ENCODE measurements at regions of chr12 and their contacts with region 1.

Region 1: DNA sequence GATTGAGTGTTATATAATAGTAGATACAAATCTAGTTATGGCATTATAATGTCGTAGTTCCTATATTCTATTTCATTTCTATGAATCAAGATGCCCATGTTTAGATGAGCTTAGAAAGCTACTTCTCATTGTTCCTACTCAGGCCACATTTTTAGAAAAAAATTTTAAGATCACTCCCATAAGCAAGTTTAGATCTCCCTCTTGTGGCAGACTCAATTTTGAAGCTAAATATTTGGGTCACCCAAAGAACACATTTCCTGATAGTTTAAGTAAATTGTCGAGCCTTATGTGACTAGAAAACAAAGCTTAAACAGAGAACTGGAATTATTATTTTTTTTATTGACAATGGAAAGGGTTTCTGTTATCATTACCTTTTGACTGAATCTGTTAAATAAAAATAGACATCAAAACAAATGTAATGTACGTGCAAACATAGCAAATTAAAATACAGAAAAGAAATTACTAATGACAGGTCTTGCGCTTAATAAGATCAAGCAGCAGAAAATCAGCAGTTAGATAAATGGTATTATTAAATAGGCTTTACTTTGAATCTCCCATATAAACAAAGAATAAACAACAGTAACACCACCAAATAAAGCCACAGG is 180.2 kb downstream of the ACSS3 start:
- DNase-seq: peak; percentile 30
- H3K4me3 Mint-ChIP-seq: no peak overlapping the region
- H3K27ac Mint-ChIP-seq: no peak overlapping the region
- H3K4me1 Mint-ChIP-seq: no peaks in the 10 kb centered on the region
- H3K27me3 Mint-ChIP-seq: no peaks in the 10 kb centered on the region
- CTCF ChIP-seq: peak; percentile 19

Region 2: DNA sequence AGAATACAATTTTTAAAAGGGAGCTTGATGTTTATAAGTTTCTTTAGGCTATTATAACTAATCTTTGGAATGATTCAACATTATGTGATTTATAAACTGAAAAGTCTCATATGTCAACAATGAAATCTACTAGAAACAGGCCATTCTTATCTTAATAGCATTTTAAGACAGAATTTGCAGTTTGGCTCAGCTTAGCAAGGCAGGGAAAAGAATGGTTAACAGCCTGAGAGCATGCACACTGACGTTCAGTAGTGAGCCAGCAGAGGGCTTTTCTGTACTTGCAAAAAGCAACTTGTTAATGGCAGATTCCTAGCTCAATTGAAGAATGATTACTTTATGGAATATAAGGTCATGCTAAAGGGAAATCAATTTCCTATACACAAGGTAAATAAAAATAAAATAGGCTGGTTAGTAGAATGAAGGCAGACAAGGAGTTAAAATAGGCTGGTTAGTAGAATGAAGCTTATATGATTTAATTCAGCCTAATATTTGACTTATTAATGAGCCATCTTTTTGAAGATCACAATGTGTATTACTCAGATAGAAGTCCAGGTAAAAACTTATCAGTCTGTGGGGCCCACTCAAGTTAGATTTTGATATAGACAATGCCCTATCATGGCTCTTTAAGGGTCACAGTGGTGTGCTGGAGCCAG is 1062.8 kb before region 1 on chr12:
- CTCF ChIA-PET with region 1: interaction called, 3 read pairs
- intact Hi-C with region 1: loop called (anchors 5 kb)
- DNase-seq: peak; percentile 48
- H3K4me3 Mint-ChIP-seq: no peak overlapping the region
- H3K27ac Mint-ChIP-seq: no peak overlapping the region
- H3K4me1 Mint-ChIP-seq: no peaks in the 10 kb centered on the region
- H3K27me3 Mint-ChIP-seq: no peaks in the 10 kb centered on the region
- CTCF ChIP-seq: peak; percentile 51

Region 3: DNA sequence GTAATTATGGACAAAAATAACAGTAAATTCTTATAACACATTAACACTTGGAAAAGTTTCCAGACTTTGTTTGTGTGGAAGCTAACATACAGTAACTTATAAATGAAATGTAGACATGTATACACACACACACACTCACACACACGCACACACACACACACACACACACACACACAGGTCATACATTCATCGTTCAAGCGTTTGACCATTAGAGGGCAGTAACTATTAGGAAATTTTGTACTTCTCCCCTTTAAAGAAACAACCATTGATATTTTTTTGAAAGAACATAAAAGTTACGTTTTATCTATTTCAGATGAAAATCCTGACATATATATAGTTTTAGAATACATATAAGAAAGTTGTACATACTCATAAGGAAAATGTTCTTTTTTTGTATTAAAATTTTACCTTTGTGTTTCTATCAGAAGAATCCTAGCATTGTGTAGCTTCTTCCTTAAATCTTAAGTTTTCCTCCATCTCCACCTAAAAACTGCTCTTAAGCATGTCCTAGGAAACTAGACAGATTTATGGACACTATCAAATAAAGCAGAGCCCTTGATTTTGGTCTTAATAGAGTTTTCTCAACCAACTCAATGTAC is 785.0 kb before region 1 on chr12:
- CTCF ChIA-PET with region 1: no interaction called
- intact Hi-C with region 1: loop called (anchors 5 kb)
- DNase-seq: peak; percentile 49
- H3K4me3 Mint-ChIP-seq: no peak overlapping the region
- H3K27ac Mint-ChIP-seq: no peak overlapping the region
- H3K4me1 Mint-ChIP-seq: no peaks in the 10 kb centered on the region
- H3K27me3 Mint-ChIP-seq: no peaks in the 10 kb centered on the region
- CTCF ChIP-seq: peak; percentile 30

Region 4: GRCh38 chr12:80756875-80757274 is 501.2 kb before region 1 on chr12:
- CTCF ChIA-PET with region 1: no interaction called
- intact Hi-C with region 1: loop called (anchors 5 kb)
- DNase-seq: no peak
- H3K4me3 Mint-ChIP-seq: no peak overlapping the region
- H3K27ac Mint-ChIP-seq: no peak overlapping the region
- H3K4me1 Mint-ChIP-seq: no peaks in the 10 kb centered on the region
- H3K27me3 Mint-ChIP-seq: no peaks in the 10 kb centered on the region
- CTCF ChIP-seq: no peak

Region 5: DNA sequence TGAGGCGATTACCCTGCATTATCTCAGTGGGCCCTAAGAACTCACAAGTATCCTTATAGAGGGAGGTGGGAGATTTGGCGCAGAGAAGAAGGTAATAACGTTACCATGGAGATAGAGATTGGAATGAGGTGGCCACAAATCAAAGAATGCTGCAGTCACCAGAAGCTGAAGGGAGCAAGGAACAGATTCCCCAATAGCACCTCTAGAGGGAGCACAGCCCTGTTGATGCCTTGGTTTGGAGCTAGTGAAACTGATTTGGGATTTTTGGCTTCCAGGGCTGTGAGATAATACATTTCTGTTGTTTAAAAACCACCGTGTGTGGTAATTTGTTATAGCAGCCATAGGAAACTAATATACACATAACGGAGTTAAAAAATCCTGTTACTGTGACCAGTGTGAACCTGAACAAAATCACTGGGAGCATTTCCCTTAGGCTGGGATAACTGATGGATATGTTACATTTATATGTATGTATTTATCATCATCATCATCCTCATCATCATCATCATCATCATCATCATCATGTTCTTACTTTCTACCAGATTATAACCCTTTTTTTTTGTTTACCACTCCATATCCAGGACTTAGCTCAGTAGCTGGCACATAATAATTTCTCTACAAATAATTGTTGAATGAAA is 420.6 kb before region 1 on chr12:
- CTCF ChIA-PET with region 1: interaction called, 11 read pairs
- intact Hi-C with region 1: loop called (anchors 2 kb)
- DNase-seq: peak; percentile 45
- H3K4me3 Mint-ChIP-seq: no peak overlapping the region
- H3K27ac Mint-ChIP-seq: no peak overlapping the region
- H3K4me1 Mint-ChIP-seq: no peaks in the 10 kb centered on the region
- H3K27me3 Mint-ChIP-seq: no peaks in the 10 kb centered on the region
- CTCF ChIP-seq: peak; percentile 64

Region 6: DNA sequence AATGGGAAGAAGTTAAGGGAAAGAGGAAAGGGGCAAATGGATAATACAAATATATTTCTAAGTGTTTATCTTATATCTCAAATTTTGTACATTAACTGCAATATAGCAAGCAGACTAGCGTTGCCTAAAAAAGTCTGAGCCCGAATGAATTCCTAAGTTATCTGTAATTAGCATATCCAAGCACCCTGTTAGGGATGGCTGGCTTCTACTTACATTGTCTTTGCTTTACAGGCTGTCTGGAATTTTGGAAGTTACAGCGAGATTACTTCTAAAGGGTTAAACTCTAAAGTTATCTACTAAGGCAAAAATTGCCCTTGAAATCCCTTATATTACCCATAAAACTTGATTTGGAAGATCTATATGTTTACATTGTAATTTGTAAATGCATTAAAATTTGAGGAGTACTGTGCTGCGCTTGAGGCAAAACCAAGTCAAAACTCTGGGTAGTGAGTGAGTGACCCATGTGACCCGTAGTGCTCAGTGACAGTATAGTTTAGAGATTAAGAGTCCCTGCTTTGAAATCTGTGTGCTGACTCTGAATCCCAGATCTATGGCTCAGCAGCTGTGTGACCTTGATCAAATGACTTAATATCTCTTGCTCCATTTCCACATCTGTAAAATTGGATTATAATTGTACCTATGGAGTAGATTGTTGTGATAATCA is 303.1 kb before region 1 on chr12:
- CTCF ChIA-PET with region 1: no interaction called
- intact Hi-C with region 1: loop called (anchors 5 kb)
- DNase-seq: no peak
- H3K4me3 Mint-ChIP-seq: no peak overlapping the region
- H3K27ac Mint-ChIP-seq: no peak overlapping the region
- H3K4me1 Mint-ChIP-seq: no peaks in the 10 kb centered on the region
- H3K27me3 Mint-ChIP-seq: no peaks in the 10 kb centered on the region
- CTCF ChIP-seq: no peak

Region 7: GRCh38 chr12:81034926-81035325 is 223.1 kb before region 1 on chr12:
- CTCF ChIA-PET with region 1: no interaction called
- intact Hi-C with region 1: no loop called
- DNase-seq: no peak
- H3K4me3 Mint-ChIP-seq: no peak overlapping the region
- H3K27ac Mint-ChIP-seq: no peak overlapping the region
- H3K4me1 Mint-ChIP-seq: no peaks in the 10 kb centered on the region
- H3K27me3 Mint-ChIP-seq: no peaks in the 10 kb centered on the region
- CTCF ChIP-seq: no peak

Region 8: GRCh38 chr12:81147292-81147919 is 110.6 kb before region 1 on chr12:
- CTCF ChIA-PET with region 1: no interaction called
- intact Hi-C with region 1: loop called (anchors 5 kb)
- DNase-seq: no peak
- H3K4me3 Mint-ChIP-seq: no peak overlapping the region
- H3K27ac Mint-ChIP-seq: no peak overlapping the region
- H3K4me1 Mint-ChIP-seq: no peaks in the 10 kb centered on the region
- H3K27me3 Mint-ChIP-seq: no peaks in the 10 kb centered on the region
- CTCF ChIP-seq: no peak

Region 9: DNA sequence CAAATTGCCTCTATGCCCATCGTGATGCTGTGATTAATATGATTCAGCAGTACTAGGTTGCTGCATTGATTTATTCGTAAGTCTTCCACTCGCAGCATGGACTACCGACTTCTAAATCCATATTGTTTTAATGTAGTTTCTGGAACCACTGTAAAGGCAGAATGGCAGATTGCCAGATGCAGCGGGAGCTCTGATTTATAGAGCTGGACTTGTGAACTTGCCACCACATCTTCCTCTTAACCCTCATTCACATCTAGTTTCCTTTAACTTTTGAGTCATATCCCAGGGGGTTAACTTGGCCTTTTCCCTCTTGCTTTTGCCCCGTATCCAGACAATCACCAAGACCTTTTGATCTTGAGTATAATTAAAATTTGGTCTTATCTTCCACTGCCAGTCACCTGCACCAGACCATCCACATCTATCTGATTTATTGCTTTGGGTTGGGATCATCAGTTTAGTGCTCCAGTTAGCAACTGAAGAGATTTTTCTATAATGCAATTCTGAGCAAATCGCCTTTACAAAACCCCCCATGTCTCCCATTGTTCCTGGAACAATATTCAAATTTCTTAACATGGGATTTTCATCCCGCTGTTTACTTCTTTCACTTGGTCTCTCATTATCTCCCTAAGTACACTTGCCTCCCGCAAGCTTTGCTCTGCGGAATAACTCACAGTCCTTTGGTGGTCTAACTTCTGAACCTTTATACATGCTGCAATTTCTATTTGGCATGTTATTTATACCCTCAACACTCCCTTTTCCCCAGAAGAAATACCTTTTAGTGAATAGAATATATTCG is 49.7 kb before region 1 on chr12:
- CTCF ChIA-PET with region 1: no interaction called
- intact Hi-C with region 1: no loop called
- DNase-seq: no peak
- H3K4me3 Mint-ChIP-seq: no peak overlapping the region
- H3K27ac Mint-ChIP-seq: no peak overlapping the region
- H3K4me1 Mint-ChIP-seq: no peaks in the 10 kb centered on the region
- H3K27me3 Mint-ChIP-seq: no peaks in the 10 kb centered on the region
- CTCF ChIP-seq: no peak

Region 10: DNA sequence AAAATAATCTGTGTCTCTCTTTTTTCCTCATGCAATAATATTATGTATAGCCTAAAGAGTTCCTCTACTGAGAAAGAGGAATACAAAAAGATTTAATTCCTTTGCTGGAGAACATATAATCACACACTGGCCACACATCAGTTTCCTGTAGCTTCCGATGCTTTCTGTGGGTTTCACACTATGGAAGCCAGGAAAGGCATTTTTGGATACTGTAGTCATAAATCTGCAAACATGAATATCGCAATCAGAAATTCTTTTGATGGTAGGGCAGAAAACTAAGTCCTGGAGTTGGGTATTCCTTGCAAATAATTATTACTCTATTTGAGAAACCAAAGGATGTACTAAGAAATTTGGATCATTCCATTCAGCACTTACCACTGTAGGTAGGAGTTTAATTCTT is 79.8 kb after region 1 on chr12:
- CTCF ChIA-PET with region 1: no interaction called
- intact Hi-C with region 1: no loop called
- DNase-seq: no peak
- H3K4me3 Mint-ChIP-seq: no peak overlapping the region
- H3K27ac Mint-ChIP-seq: no peak overlapping the region
- H3K4me1 Mint-ChIP-seq: no peaks in the 10 kb centered on the region
- H3K27me3 Mint-ChIP-seq: no peaks in the 10 kb centered on the region
- CTCF ChIP-seq: no peak